SK-N-SH (cell line): ENCODE measurements at regions of chr1 and their contacts with region 1.

Region 1: DNA sequence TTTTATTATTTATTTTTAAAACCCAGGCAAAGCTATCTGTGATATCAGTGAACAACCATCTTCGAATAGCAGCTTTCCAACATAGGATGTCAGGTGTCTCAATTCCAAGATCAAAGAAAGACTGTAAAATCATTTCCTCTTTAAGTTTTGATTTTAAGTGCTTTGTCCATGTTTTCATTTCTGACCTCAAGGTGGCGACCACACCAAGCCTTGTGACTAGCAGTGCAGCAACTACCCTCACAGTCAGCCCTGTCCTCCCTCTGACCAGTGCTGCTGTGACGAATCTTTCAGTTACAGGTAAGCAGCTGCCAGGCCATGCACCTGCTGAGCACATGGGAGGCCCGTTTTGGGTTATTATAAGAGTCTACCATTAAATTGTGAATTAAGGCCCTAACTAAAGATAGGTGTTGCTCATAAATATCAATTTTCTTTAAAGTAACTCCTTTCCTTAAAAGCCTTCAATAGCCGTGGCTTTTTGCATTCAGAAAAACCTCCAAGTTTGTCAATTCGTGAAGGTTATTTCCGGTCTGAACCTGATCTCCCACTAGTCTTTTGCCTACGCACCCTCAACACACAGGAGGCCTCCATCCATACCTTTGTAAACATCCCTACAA is 117.0 kb downstream of the CD247 start:
- DNase-seq: peak; percentile 48
- H3K4me3 ChIP-seq: no peak overlapping the region
- H3K27ac ChIP-seq: no peak overlapping the region
- H3K4me1 ChIP-seq: no peaks in the 10 kb centered on the region; a peak in 2 of 4 replicates
- H3K27me3 ChIP-seq: no peaks in the 10 kb centered on the region
- CTCF ChIP-seq: peak; percentile 65
- EP300 ChIP-seq: no peak
- RAD21 ChIP-seq: peak; percentile 79

Region 2: GRCh38 chr1:167276969-167277368 is 124.4 kb before region 1 on chr1:
- CTCF ChIA-PET with region 1: no interaction called
- POLR2A ChIA-PET with region 1: no interaction called
- DNase-seq: no peak
- H3K4me3 ChIP-seq: no peak overlapping the region
- H3K27ac ChIP-seq: no peak overlapping the region
- H3K4me1 ChIP-seq: peaks cover 0 to 8% of the 10 kb centered on the region in 2 experiments; a peak in 3 of 4 replicates
- H3K27me3 ChIP-seq: no peaks in the 10 kb centered on the region
- CTCF ChIP-seq: no peak
- EP300 ChIP-seq: no peak
- RAD21 ChIP-seq: no peak

Region 3: GRCh38 chr1:167423684-167424619 is 22.6 kb after region 1 on chr1:
- CTCF ChIA-PET with region 1: interaction called, 15 read pairs
- POLR2A ChIA-PET with region 1: no interaction called
- DNase-seq: no peak
- H3K4me3 ChIP-seq: no peak overlapping the region
- H3K27ac ChIP-seq: no peak overlapping the region
- H3K4me1 ChIP-seq: no peaks in the 10 kb centered on the region; a peak in 1 of 4 replicates
- H3K27me3 ChIP-seq: no peaks in the 10 kb centered on the region
- CTCF ChIP-seq: no peak
- EP300 ChIP-seq: no peak
- RAD21 ChIP-seq: no peak